ENCODE measurements at regions of chr6 and their contacts with region 1.

Region 1: GRCh38 chr6:1609648-1610496 is at the start of gene FOXC1:
- DNase-seq: peak; percentile 93 to 98
- H3K4me3 ChIP-seq: peak within 1 kb of the TSS; percentile 91 to 93
- H3K27ac ChIP-seq: peak within 1 kb of the TSS; percentile 98
- H3K4me1 ChIP-seq: peaks cover 4 to 9% (median 5%) of the 10 kb centered on the region in 4 donors
- H3K27me3 ChIP-seq: no peaks in the 10 kb centered on the region
- CTCF ChIP-seq: no peak

Region 2: DNA sequence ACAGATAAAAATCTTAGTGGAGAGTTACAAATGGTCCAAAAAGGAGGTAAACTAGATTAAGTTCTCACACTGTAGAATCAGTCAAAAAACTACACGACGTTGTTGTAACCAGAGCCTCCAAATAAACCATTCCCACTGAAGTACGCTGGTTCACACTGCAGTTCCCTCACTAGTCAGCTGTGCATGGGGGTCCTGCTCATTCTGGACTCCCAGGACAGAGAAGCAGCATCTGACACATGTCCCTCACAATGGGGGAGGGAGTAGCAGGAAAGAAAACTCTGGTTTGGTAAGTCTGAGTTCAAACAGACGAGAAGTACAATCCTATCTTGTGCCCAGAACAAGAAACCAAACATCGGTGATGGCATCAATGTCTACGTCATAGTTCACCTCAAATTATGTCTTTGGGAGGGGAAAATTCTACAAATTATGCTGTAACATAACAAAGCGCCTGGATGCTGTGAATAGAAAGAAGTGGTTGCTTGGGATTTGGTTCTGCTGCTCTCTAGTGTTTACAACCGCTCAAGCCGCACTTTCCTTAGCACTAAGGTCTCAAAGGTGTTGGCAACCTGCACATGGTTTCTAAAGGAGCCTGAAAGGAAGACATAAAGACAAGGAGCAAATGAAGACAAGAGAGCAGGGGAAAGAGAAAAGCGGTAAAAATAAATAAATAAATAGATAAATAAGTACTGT is 427.5 kb after region 1 on chr6:
- intact Hi-C with region 1: loop called (anchors 10 kb)
- DNase-seq: no peak
- H3K4me3 ChIP-seq: no peak overlapping the region
- H3K27ac ChIP-seq: peak overlapping the region in 1 of 2 donors; percentile 24
- H3K4me1 ChIP-seq: peaks cover 0 to 12% (median 2%) of the 10 kb centered on the region in 4 donors
- H3K27me3 ChIP-seq: no peaks in the 10 kb centered on the region
- CTCF ChIP-seq: peak in 1 of 2 experiments; percentile 36

Region 3: DNA sequence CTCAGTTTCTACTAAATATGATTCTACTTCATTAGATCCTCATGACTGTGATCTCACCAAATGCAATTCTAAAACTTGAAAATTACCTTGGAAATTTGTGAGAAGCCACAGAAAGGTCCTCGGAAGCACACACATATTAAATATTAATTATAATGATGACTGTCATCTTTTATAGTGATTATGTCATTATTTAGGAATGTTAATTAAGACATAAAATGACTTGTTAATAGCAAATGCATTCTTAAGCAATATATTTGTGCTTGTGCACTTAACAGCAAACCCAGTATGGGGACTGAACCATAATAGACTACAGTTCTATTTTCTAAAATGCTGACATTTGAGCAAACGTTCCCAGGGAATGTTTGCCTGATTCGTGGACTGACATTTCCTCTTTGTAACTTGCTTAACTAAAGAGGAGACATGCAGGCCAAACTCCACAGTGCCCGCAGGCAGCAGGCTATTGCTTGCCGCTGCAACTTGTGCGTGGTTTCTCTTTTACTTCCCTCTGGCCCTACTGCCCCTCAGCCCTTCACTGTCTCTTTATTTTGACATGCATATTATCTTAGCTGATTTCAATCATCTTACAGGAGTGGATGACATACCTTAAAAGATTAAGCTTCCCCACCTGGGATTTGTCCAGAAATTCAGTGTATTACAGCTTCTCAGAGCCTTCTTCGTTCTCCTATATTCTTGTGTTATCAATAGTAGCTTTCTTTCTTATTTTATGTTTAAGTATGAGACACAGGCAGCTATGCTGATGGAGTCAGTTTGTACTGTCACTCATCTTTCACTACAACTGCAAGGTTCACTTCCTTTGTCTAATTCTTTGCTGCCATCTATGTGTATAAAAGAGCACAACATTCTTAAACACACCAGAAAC is 494.0 kb after region 1 on chr6:
- intact Hi-C with region 1: loop called (anchors 2 kb)
- DNase-seq: peak; percentile 39 to 75
- H3K4me3 ChIP-seq: peak overlapping the region; percentile 46 to 51
- H3K27ac ChIP-seq: peak overlapping the region; percentile 60 to 85
- H3K4me1 ChIP-seq: peaks cover 0 to 31% (median 2%) of the 10 kb centered on the region in 4 donors
- H3K27me3 ChIP-seq: no peaks in the 10 kb centered on the region
- CTCF ChIP-seq: peak; percentile 54 to 67

Region 4: DNA sequence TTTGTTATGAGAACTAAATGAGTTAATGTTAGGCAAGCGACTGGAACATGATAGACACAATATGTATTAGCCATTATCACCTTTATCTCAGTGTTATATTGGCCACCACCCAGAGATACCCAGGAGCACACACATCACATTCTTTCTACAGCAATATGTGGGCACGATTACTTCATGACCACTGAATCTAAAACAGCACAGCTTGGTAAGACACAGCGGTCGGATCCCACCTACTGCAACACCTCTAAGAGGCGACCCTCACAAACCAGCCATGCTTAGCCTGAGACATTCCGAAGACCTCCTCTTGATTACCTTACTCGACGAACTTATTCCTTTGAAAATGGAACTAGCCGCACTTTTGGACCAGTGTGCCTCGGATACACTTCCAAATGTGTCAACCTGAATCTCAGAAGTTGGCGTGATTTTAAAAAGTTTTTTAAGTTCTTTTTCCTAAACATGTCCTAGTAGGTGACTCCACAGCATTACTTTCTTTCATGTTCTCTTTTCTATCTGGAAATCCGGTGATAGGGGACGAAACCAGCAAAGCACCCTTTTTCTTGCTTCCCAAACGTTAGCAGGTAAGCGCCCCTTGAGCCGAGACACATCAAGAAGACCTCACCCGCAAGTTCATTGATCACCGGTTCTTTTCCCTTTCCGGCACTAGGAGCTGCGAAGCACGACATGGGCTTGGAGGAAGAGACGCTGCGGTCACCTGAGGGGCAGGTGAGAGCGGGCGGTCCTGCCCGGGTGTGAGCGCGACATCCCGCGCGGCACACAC is 634.6 kb after region 1 on chr6:
- intact Hi-C with region 1: loop called (anchors 5 kb)
- DNase-seq: no peak
- H3K4me3 ChIP-seq: peak overlapping the region; percentile 89 to 97
- H3K27ac ChIP-seq: peak overlapping the region; percentile 75 to 93
- H3K4me1 ChIP-seq: peaks cover 0 to 41% (median 17%) of the 10 kb centered on the region in 4 donors
- H3K27me3 ChIP-seq: no peaks in the 10 kb centered on the region
- CTCF ChIP-seq: no peak

Region 5: DNA sequence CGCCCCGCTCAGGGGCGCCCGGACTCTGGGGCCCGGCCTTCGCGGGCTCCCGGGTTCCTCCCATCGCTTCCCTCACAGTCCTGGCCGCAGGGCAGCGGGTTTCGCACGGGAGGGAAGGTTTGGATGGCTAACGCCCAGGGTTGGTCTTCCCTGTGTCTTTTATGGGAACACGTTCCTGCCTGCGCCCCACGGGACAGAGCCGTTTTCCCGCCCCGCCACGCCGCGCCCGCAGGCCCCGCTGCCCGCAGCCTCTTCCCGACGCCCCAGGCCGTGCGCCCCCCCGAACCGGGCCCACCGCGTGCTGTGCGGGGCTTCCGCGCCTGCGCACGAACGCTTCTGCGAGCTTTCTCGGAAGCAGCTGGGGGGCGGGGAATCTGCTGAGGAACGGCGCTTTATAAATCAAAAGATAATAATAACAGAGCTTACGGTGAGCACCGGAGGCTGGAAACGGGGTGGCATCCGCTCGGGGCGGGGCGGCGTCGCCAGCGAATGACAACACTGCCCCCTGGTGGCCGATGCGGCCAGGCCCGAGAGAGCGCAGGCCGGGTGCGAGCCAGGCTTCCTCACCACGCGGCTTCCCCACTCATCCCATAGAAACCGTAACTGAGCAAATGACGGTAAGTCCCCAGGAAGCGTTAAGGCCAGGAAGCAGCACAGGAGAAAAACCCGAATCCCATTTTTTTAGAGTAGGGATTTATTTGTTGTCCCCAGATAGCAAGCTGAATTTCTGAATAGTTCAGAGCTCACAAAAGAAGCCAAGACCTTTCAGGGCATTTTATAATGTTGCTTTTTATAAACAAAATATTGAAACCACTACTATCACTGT is 1024.5 kb after region 1 on chr6:
- intact Hi-C with region 1: loop called (anchors 5 kb)
- DNase-seq: peak; percentile 81 to 94
- H3K4me3 ChIP-seq: peak overlapping the region; percentile 53 to 70
- H3K27ac ChIP-seq: peak overlapping the region; percentile 93 to 94
- H3K4me1 ChIP-seq: peaks cover 0 to 52% (median 42%) of the 10 kb centered on the region in 4 donors
- H3K27me3 ChIP-seq: no peaks in the 10 kb centered on the region
- CTCF ChIP-seq: peak; percentile 98

Measured in tibial artery (tissue), 4 donors.